ENCODE measurements at regions of chr17 and their contacts with region 1.

Region 1: GRCh38 chr17:60695960-60696359 is 18.3 kb downstream of the BCAS3 start:
- DNase-seq: no peak
- ATAC-seq: no peak
- H3K4me3 ChIP-seq: no peak overlapping the region
- H3K4me3 Mint-ChIP-seq: no peak overlapping the region
- H3K27ac ChIP-seq: no peak overlapping the region
- H3K27ac Mint-ChIP-seq: no peak overlapping the region
- H3K4me1 ChIP-seq: no peaks in the 10 kb centered on the region
- H3K4me1 Mint-ChIP-seq: peaks cover 0 to 2% (median 0%) of the 10 kb centered on the region in 3 donors
- H3K27me3 ChIP-seq: no peaks in the 10 kb centered on the region
- H3K27me3 Mint-ChIP-seq: no peaks in the 10 kb centered on the region

Region 2: DNA sequence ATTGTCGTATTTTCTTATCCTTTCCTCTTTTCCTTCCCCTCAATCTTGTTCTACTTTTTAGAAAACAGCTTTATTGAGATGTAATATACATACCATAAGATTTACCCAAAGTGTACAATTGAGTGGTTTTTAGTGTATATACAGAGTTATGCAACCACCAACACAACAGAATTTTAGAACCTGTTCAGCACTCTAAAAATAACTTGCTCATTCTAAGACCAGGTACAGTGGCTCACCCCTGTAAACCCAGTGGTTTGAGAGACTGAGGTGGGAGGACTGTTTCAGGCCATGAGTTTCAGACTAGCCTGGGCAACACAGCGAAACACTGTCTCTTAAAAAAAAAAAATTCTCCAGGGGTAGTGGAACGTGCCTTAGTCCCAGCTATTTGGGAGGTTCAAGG is 1206.4 kb after region 1 on chr17:
- CTCF ChIA-PET with region 1: interaction called in 1 of 2 experiments, 11 read pairs
- POLR2A ChIA-PET with region 1: no interaction called
- DNase-seq: no peak
- ATAC-seq: no peak
- H3K4me3 ChIP-seq: no peak overlapping the region
- H3K4me3 Mint-ChIP-seq: no peak overlapping the region
- H3K27ac ChIP-seq: no peak overlapping the region
- H3K27ac Mint-ChIP-seq: no peak overlapping the region
- H3K4me1 ChIP-seq: peaks cover 0 to 4% of the 10 kb centered on the region in 2 experiments
- H3K4me1 Mint-ChIP-seq: peaks cover 0 to 10% (median 4%) of the 10 kb centered on the region in 3 donors
- H3K27me3 ChIP-seq: no peaks in the 10 kb centered on the region
- H3K27me3 Mint-ChIP-seq: no peaks in the 10 kb centered on the region